Activated B cell treated with CpG ODN at 0.5 μM for 24 hours (primary cell): ENCODE measurements at regions of chrX and their contacts with region 1.

Region 1: DNA sequence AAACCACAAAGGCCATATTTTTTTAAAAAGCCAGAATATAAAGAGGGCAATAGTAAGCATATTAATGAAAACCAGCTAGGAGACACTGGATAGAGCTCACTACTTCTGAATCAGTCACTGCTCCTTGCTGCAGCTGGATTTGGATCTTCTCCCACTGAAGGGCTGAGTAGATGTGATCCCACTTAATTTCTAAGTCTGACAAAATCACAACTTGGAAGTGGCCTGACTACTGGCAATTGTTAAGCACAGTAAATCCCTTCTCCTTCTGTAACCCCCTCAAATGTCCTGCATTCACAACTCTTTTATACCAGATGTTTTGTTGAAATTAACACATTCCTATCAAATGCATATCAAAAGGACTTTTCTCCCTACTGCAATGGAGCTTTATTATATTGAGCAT is 72.9 kb downstream of the AMMECR1 start:
- DNase-seq: no peak
- ATAC-seq: no peak
- H3K4me3 Mint-ChIP-seq: no peak overlapping the region
- H3K27ac Mint-ChIP-seq: no peak overlapping the region
- H3K4me1 Mint-ChIP-seq: peaks cover 14% of the 10 kb centered on the region
- H3K27me3 Mint-ChIP-seq: no peaks in the 10 kb centered on the region
- CTCF ChIP-seq: no peak

Region 2: DNA sequence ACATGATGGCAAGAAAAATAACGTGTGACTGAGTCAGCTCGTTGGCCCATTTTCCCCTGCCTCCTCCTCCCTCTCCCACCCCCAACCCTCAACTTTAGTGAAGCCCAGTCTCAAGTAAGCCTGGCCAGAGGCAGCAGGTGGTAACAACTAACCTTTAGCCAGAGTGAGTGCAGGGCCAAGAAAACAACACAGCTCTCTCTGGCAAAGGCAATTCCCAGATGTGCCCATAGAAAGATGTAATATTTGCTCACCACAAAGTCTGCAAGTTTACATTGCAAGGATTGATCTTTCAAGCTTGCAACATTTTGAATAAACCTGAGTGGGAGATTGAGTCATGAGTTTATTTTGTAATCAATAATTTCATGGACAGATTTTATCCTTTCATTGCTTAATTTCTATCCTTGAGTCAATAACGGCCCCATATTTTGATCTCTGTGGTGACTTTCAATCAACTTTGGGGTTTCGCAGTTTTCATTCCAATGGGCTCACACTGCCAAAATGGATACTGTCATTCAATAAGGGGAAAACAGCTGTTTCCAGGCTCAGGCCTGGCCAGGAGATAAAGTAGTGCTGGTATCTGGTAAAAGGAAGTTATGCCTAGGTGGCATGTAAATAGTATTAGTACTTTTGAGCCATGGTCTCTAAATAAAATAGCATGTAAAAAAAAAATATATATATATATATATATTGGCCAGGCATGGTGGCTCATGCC is 372.8 kb before region 1 on chrX:
- CTCF ChIA-PET with region 1: no interaction called
- POLR2A ChIA-PET with region 1: no interaction called
- intact Hi-C with region 1: no loop called
- DNase-seq: no peak
- ATAC-seq: no peak
- H3K4me3 Mint-ChIP-seq: no peak overlapping the region
- H3K27ac Mint-ChIP-seq: no peak overlapping the region
- H3K4me1 Mint-ChIP-seq: no peaks in the 10 kb centered on the region
- H3K27me3 Mint-ChIP-seq: no peaks in the 10 kb centered on the region
- CTCF ChIP-seq: no peak

Region 3: DNA sequence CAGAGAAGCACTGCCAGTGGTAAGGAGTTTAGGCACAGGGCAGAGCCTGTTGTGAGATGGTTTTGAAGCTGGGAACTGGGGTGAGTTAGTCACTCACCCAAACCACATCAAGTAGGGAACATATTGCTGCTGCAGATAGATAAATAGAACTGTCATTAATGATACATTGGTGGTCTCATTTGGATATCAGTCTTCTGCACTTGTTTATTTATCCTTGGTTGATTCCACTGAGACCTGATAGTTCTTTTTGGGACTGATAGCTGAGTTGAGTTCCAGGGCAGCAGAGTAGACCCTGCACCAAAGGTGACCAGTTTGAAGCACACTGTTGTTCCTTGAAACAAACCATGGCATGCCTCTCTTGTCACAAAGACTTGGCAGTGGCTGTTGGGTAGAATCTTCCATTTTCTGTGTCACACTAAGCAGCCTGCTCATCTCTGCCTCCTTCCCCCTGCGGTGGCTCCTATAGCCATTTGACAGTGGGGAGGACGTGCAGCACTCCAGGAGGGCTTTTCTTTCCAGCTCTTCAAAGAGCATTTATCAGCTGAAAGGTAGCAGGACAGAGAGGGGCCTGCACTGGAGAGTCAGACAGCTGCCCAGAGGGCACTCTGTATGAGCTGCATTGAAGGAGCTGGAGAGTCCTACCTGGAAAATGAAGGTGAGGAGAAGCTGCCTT is 301.8 kb before region 1 on chrX:
- CTCF ChIA-PET with region 1: no interaction called
- POLR2A ChIA-PET with region 1: no interaction called
- intact Hi-C with region 1: no loop called
- DNase-seq: no peak
- ATAC-seq: no peak
- H3K4me3 Mint-ChIP-seq: no peak overlapping the region
- H3K27ac Mint-ChIP-seq: no peak overlapping the region
- H3K4me1 Mint-ChIP-seq: no peaks in the 10 kb centered on the region
- H3K27me3 Mint-ChIP-seq: no peaks in the 10 kb centered on the region
- CTCF ChIP-seq: no peak

Region 4: DNA sequence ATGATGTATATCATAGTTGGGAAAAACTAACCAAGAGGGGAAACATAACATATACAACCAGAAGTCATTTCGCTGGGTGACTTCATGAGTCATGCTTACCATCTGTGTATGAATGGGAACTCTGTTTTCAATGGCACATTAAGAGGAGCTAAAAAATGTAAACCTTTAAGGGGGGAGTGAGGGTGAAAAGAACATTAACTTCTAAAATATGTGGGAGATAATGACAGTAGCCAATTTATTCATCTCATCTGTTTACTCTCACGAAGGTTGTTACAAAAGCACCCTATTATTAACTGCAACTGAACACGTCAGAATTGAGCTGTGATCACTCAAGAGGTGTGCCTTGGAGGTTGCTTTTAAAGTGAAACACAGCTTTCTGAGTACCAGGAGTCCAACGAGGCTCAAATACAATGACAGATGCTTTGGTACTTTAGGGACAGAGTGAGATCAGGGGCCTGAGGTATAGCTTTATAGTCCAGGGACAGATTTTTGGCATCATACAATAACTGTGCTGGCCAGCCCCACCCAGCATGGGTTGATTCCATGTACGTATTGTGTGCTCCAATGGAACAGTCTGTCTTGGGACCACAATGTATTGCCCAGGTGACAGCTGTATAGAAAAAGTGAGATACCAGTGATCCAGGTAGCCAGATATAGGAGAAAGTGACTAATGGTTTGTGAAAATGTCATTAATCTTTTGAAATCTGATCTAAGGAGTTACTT is 34.4 kb before region 1 on chrX:
- CTCF ChIA-PET with region 1: no interaction called
- POLR2A ChIA-PET with region 1: no interaction called
- intact Hi-C with region 1: loop called (anchors 5 kb)
- DNase-seq: no peak
- ATAC-seq: no peak
- H3K4me3 Mint-ChIP-seq: no peak overlapping the region
- H3K27ac Mint-ChIP-seq: no peak overlapping the region
- H3K4me1 Mint-ChIP-seq: no peaks in the 10 kb centered on the region
- H3K27me3 Mint-ChIP-seq: no peaks in the 10 kb centered on the region
- CTCF ChIP-seq: no peak

Region 5: DNA sequence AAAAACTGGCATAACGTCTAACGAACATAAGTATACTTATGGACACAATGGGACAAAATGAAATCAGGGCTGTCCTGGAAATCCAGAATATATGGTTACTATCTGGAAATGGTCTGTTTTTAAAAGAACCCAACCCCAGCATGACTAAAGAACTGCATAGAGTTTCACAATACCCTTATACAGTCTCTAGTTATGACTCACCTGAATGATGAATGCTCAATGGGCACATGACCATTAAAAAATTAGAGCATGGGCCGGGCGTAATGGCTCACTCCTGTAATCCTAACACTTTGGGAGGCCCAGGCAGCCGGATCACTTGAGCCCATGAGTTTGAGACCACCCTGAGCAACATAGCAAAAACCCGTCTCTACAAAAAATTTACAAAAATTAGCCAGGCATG is 41.1 kb after region 1 on chrX:
- CTCF ChIA-PET with region 1: no interaction called
- POLR2A ChIA-PET with region 1: no interaction called
- intact Hi-C with region 1: no loop called
- DNase-seq: no peak
- ATAC-seq: no peak
- H3K4me3 Mint-ChIP-seq: no peak overlapping the region
- H3K27ac Mint-ChIP-seq: no peak overlapping the region
- H3K4me1 Mint-ChIP-seq: peaks cover 3% of the 10 kb centered on the region
- H3K27me3 Mint-ChIP-seq: no peaks in the 10 kb centered on the region
- CTCF ChIP-seq: no peak